Colonic mucosa (tissue), 4 donors: ENCODE measurements at regions of chr10 and their contacts with region 1.

Region 1: DNA sequence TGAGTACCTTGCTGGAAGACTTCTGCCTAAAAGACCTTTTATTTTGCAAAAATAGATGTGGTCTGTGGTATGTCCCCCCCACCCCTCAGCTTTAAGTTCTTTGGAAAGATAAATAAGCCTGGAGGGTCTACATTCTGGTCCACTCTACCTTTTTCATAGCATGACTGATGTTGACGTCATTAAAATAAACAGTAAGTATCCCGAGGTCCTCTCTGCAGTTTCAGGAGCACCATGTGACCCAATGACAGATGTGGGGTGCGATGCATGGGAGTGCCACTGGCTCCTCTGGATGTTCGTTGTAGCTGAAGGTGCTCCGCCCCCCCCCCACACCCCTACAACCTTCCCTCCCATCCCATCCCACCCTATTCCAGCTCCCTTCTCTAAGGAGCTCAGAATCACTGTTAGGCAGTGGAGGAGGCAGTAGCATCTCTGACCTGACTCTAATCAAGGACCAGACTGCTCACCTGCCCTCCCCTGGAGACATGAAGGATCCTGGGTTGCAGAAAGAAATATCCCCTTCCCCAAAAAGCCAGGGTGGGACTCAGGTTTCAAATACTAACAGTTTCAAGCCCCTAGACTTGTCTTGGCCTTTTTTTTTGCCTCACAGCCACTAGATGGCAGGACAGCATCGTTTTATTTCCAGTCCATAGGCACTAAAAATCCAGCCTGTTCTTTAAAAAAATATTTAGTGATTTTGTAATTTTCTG is 25.1 kb downstream of the CASP7 start:
- DNase-seq: peak; percentile 29
- H3K4me3 ChIP-seq: no peak overlapping the region
- H3K27ac ChIP-seq: no peak overlapping the region
- H3K4me1 ChIP-seq: no peaks in the 10 kb centered on the region
- H3K27me3 ChIP-seq: no peaks in the 10 kb centered on the region
- CTCF ChIP-seq: peak; percentile 41

Region 2: GRCh38 chr10:113648478-113648877 is 56.3 kb before region 1 on chr10:
- intact Hi-C with region 1: no loop called
- DNase-seq: no peak
- H3K4me3 ChIP-seq: no peak overlapping the region
- H3K27ac ChIP-seq: no peak overlapping the region
- H3K4me1 ChIP-seq: no peaks in the 10 kb centered on the region
- H3K27me3 ChIP-seq: no peaks in the 10 kb centered on the region
- CTCF ChIP-seq: no peak

Region 3: GRCh38 chr10:113791691-113792090 is 86.9 kb after region 1 on chr10:
- intact Hi-C with region 1: loop called (anchors 10 kb)
- DNase-seq: no peak
- H3K4me3 ChIP-seq: no peak overlapping the region
- H3K27ac ChIP-seq: no peak overlapping the region
- H3K4me1 ChIP-seq: no peaks in the 10 kb centered on the region
- H3K27me3 ChIP-seq: no peaks in the 10 kb centered on the region
- CTCF ChIP-seq: no peak

Region 4: GRCh38 chr10:113854011-113854760 is 149.4 kb after region 1 on chr10 and contains the starts of genes DCLRE1A and NHLRC2:
- intact Hi-C with region 1: loop called (anchors 10 kb)
- DNase-seq: peak; percentile 87
- H3K4me3 ChIP-seq: peak within 1 kb of the TSS; percentile 96
- H3K27ac ChIP-seq: peak within 1 kb of the TSS; percentile 81
- H3K4me1 ChIP-seq: peaks cover 16% of the 10 kb centered on the region
- H3K27me3 ChIP-seq: no peaks in the 10 kb centered on the region
- CTCF ChIP-seq: no peak
- total RNA-seq, gene DCLRE1A: 6.2 to 8.5 TPM
- total RNA-seq, gene NHLRC2: 31.2 to 46.1 TPM

Region 5: GRCh38 chr10:114103284-114103683 is 398.5 kb after region 1 on chr10:
- intact Hi-C with region 1: loop called (anchors 2 kb)
- DNase-seq: no peak
- H3K4me3 ChIP-seq: no peak overlapping the region
- H3K27ac ChIP-seq: no peak overlapping the region
- H3K4me1 ChIP-seq: no peaks in the 10 kb centered on the region
- H3K27me3 ChIP-seq: no peaks in the 10 kb centered on the region
- CTCF ChIP-seq: peak; percentile 60

Region 6: GRCh38 chr10:114142018-114142417 is 437.2 kb after region 1 on chr10:
- intact Hi-C with region 1: no loop called
- DNase-seq: no peak
- H3K4me3 ChIP-seq: no peak overlapping the region
- H3K27ac ChIP-seq: no peak overlapping the region
- H3K4me1 ChIP-seq: no peaks in the 10 kb centered on the region
- H3K27me3 ChIP-seq: no peaks in the 10 kb centered on the region
- CTCF ChIP-seq: no peak